SK-N-SH (cell line): ENCODE measurements at regions of chr4 and their contacts with region 1.

Region 1: DNA sequence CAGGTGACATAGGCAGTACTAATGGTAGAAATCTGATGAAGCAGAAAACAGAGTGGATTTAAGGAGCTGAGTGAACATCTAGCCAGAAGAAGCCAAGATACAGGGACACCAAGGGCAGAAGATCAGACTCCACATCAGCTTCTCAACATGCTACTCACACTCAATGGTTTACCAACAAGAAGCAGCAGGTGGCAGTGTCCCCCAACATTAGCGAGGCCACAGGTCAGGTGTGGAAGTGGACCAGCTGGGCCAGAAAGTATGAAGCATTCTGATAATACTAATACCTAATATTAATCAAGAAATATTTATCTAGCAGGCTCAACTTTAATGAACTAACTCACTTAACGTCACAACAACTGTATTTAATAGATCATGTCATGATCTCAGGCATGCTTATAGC is 73.4 kb upstream of the TTC29 start:
- DNase-seq: peak; percentile 34
- H3K4me3 ChIP-seq: no peak overlapping the region
- H3K27ac ChIP-seq: no peak overlapping the region
- H3K4me1 ChIP-seq: no peaks in the 10 kb centered on the region; a peak in 1 of 4 replicates
- H3K27me3 ChIP-seq: no peaks in the 10 kb centered on the region
- CTCF ChIP-seq: peak; percentile 73
- EP300 ChIP-seq: no peak
- RAD21 ChIP-seq: peak; percentile 91

Region 2: DNA sequence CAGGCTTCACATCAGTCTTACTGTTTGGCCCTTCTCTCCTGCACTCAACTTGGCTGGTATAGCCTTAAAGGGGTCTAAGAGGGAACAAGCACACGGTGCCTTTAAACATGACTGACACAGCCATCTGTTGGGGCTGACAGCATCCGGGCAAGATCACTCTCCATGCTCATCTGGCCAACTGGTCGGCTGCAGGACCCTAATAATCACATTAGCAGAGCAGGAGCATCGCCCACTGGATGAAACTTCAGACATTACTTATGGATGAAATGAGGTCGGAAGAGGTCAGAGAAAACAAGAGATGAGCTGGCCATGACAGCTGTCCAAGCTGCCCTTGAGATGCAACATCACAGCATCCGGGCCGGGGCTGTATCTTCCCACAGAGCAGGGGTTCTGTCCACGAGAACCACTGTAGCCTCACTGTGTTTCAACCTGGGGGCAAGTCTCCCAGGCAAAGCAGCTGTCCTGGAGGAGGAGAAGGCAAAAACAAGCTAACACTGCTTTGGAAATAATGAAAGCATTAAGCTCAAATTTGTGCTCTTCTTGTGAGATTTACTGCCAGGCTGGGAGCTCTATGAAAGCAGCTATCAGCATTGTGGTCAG is 21.0 kb after region 1 on chr4:
- CTCF ChIA-PET with region 1: interaction called, 14 read pairs
- POLR2A ChIA-PET with region 1: no interaction called
- DNase-seq: peak; percentile 44
- H3K4me3 ChIP-seq: no peak overlapping the region
- H3K27ac ChIP-seq: peak overlapping the region in 1 of 2 experiments; percentile 87; a peak in 2 of 4 replicates
- H3K4me1 ChIP-seq: peaks cover 0 to 24% of the 10 kb centered on the region in 2 experiments; a peak in 2 of 4 replicates
- H3K27me3 ChIP-seq: peaks cover 11% of the 10 kb centered on the region; the same call in 1 of the 2 replicates
- CTCF ChIP-seq: no peak
- EP300 ChIP-seq: peak in 1 of 2 experiments; percentile 47; a peak in 1 of 4 replicates
- RAD21 ChIP-seq: no peak; the same call in 1 of the 2 replicates

Region 3: GRCh38 chr4:147088146-147088545 is 69.1 kb after region 1 on chr4:
- CTCF ChIA-PET with region 1: interaction called, 22 read pairs
- POLR2A ChIA-PET with region 1: no interaction called
- DNase-seq: no peak
- H3K4me3 ChIP-seq: no peak overlapping the region
- H3K27ac ChIP-seq: no peak overlapping the region
- H3K4me1 ChIP-seq: peaks cover 0 to 8% of the 10 kb centered on the region in 2 experiments; a peak in 2 of 4 replicates
- H3K27me3 ChIP-seq: no peaks in the 10 kb centered on the region; the same call in 1 of the 2 replicates
- CTCF ChIP-seq: no peak
- EP300 ChIP-seq: no peak
- RAD21 ChIP-seq: no peak

Region 4: DNA sequence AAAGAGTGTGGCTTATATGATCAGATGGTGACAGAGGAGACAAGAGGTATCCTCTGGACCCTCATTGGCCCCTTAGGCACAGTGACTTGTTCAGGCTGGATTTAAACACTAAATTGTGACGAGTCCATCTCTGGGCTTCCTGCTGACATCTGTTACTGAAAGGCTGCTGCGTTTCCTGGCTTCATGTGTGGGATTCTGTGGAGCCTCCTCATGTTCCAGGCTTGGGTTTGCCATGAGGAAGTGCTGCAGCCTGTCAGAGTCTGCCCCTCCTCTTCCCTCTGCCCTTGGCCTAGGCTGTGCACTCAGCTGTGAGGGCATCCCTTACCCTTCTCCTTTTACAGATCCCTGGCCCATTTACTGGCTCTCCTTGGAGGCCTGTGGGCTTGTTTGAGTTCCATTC is 85.7 kb after region 1 on chr4:
- CTCF ChIA-PET with region 1: interaction called, 32 read pairs
- POLR2A ChIA-PET with region 1: no interaction called
- DNase-seq: no peak
- H3K4me3 ChIP-seq: no peak overlapping the region
- H3K27ac ChIP-seq: no peak overlapping the region
- H3K4me1 ChIP-seq: peaks cover 4 to 6% of the 10 kb centered on the region in 2 experiments; a peak in 2 of 4 replicates
- H3K27me3 ChIP-seq: no peaks in the 10 kb centered on the region
- CTCF ChIP-seq: no peak
- EP300 ChIP-seq: no peak
- RAD21 ChIP-seq: no peak

Region 5: DNA sequence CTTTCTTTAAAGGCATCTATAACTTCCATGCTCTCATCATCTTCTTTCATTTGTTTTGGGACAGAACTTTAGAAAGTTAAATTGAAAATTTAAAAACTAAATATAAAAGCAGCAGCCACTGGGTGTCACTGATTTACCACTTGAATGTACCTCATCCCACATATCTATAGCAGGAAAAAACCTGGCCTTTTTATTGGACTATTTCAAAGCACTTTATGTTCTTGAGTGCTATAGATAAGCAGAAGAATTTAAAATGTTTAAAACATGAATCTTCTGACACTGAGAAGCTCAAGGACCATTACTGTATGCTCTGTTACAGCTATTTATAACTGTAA is 91.9 kb after region 1 on chr4:
- CTCF ChIA-PET with region 1: interaction called, 12 read pairs
- POLR2A ChIA-PET with region 1: no interaction called
- DNase-seq: peak; percentile 29
- H3K4me3 ChIP-seq: no peak overlapping the region
- H3K27ac ChIP-seq: no peak overlapping the region
- H3K4me1 ChIP-seq: no peaks in the 10 kb centered on the region
- H3K27me3 ChIP-seq: no peaks in the 10 kb centered on the region
- CTCF ChIP-seq: peak; percentile 43
- EP300 ChIP-seq: no peak
- RAD21 ChIP-seq: peak; percentile 71

Region 6: DNA sequence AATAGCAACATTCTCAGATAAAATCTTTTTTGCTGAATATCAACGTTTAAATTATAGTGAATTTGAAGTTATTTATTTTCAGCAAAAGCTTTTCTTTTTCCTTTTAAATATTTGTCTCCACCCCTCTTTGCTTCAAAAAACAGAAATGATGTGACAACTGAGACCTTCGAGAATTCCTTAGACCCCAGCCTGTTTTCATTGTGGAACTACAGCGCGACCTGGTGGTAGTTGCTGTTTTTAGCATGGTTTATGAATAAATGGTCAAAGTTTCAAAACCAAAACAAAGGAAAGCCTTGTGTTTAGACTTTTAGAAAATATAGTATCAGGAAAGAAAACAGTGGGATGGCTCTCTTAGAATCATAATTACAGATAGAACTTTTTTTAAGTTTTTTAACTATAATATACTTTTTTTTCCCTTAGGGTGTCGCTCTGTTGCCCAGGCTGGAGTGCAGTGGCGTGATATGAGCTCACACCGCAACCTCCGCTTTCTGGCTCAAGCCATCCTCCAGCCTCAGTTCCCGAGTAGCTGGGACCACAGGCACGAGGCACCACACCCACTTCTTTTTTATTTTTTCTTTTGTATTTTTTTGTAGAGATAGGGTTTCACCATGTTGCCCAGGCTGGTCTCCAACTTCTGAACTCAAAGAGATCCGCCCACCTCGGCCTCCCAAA is 571.3 kb after region 1 on chr4:
- CTCF ChIA-PET with region 1: interaction called, 11 read pairs
- POLR2A ChIA-PET with region 1: no interaction called
- DNase-seq: peak; percentile 67
- H3K4me3 ChIP-seq: no peak overlapping the region
- H3K27ac ChIP-seq: no peak overlapping the region
- H3K4me1 ChIP-seq: peaks cover 7 to 12% of the 10 kb centered on the region in 2 experiments; a peak in 3 of 4 replicates
- H3K27me3 ChIP-seq: no peaks in the 10 kb centered on the region
- CTCF ChIP-seq: peak; percentile 92
- EP300 ChIP-seq: no peak
- RAD21 ChIP-seq: peak; percentile 96